ENCODE measurements at regions of chr7 and their contacts with region 1.

Region 1: GRCh38 chr7:76179686-76180085 is 22.0 kb upstream of the SRRM3 start:
- DNase-seq: no peak
- H3K4me3 ChIP-seq: no peak overlapping the region
- H3K27ac ChIP-seq: no peak overlapping the region
- H3K4me1 ChIP-seq: peaks cover 0 to 2% of the 10 kb centered on the region in 2 experiments; a peak in 1 of 4 replicates
- H3K27me3 ChIP-seq: no peaks in the 10 kb centered on the region
- CTCF ChIP-seq: no peak
- EP300 ChIP-seq: no peak
- RAD21 ChIP-seq: no peak

Region 2: GRCh38 chr7:76108540-76109241 is 71.0 kb before region 1 on chr7:
- CTCF ChIA-PET with region 1: no interaction called
- POLR2A ChIA-PET with region 1: no interaction called
- DNase-seq: no peak
- H3K4me3 ChIP-seq: no peak overlapping the region
- H3K27ac ChIP-seq: peak overlapping the region in 1 of 2 experiments; percentile 52; a peak in 2 of 4 replicates
- H3K4me1 ChIP-seq: peaks cover 0 to 9% of the 10 kb centered on the region in 2 experiments; a peak in 2 of 4 replicates
- H3K27me3 ChIP-seq: no peaks in the 10 kb centered on the region
- CTCF ChIP-seq: no peak
- EP300 ChIP-seq: no peak
- RAD21 ChIP-seq: no peak

Region 3: GRCh38 chr7:76166404-76167255 is 13.1 kb before region 1 on chr7:
- CTCF ChIA-PET with region 1: interaction called, 63 read pairs
- POLR2A ChIA-PET with region 1: interaction called, 7 read pairs
- DNase-seq: peak; percentile 99
- H3K4me3 ChIP-seq: peak overlapping the region; percentile 65 to 69
- H3K27ac ChIP-seq: peak overlapping the region; percentile 59 to 70; a peak in 3 of 4 replicates
- H3K4me1 ChIP-seq: peaks cover 0 to 3% of the 10 kb centered on the region in 2 experiments; a peak in 1 of 4 replicates
- H3K27me3 ChIP-seq: no peaks in the 10 kb centered on the region
- CTCF ChIP-seq: peak; percentile 28; the same call in 1 of the 2 replicates
- EP300 ChIP-seq: no peak
- RAD21 ChIP-seq: peak; percentile 27

Region 4: GRCh38 chr7:76211216-76211615 is 31.5 kb after region 1 on chr7:
- CTCF ChIA-PET with region 1: interaction called, 100 read pairs
- POLR2A ChIA-PET with region 1: interaction called, 4 read pairs
- DNase-seq: no peak
- H3K4me3 ChIP-seq: no peak overlapping the region
- H3K27ac ChIP-seq: no peak overlapping the region
- H3K4me1 ChIP-seq: peaks cover 0 to 9% of the 10 kb centered on the region in 2 experiments; a peak in 1 of 4 replicates
- H3K27me3 ChIP-seq: peaks cover 29% of the 10 kb centered on the region
- CTCF ChIP-seq: no peak
- EP300 ChIP-seq: no peak
- RAD21 ChIP-seq: no peak

Region 5: GRCh38 chr7:76244781-76245391 is 65.2 kb after region 1 on chr7:
- CTCF ChIA-PET with region 1: interaction called, 11 read pairs
- POLR2A ChIA-PET with region 1: interaction called, 7 read pairs
- DNase-seq: peak; percentile 51
- H3K4me3 ChIP-seq: no peak overlapping the region
- H3K27ac ChIP-seq: peak overlapping the region in 1 of 2 experiments; percentile 45; a peak in 2 of 4 replicates
- H3K4me1 ChIP-seq: peaks cover 0 to 14% of the 10 kb centered on the region in 2 experiments; a peak in 1 of 4 replicates
- H3K27me3 ChIP-seq: no peaks in the 10 kb centered on the region
- CTCF ChIP-seq: no peak
- EP300 ChIP-seq: no peak
- RAD21 ChIP-seq: no peak

Region 6: GRCh38 chr7:76272851-76273497 is 93.3 kb after region 1 on chr7:
- CTCF ChIA-PET with region 1: interaction called, 62 read pairs
- POLR2A ChIA-PET with region 1: no interaction called
- DNase-seq: no peak
- H3K4me3 ChIP-seq: no peak overlapping the region
- H3K27ac ChIP-seq: no peak overlapping the region
- H3K4me1 ChIP-seq: no peaks in the 10 kb centered on the region
- H3K27me3 ChIP-seq: no peaks in the 10 kb centered on the region
- CTCF ChIP-seq: no peak
- EP300 ChIP-seq: no peak
- RAD21 ChIP-seq: no peak

Region 7: GRCh38 chr7:76302347-76303201 is 122.9 kb after region 1 on chr7 and contains the start of gene HSPB1:
- CTCF ChIA-PET with region 1: interaction called, 88 read pairs
- POLR2A ChIA-PET with region 1: no interaction called
- DNase-seq: peak; percentile 93
- H3K4me3 ChIP-seq: peak within 1 kb of the TSS; percentile 63 to 96
- H3K27ac ChIP-seq: peak within 1 kb of the TSS; percentile 71 to 86
- H3K4me1 ChIP-seq: peaks cover 18 to 21% of the 10 kb centered on the region in 2 experiments; a peak in 2 of 4 replicates
- H3K27me3 ChIP-seq: no peaks in the 10 kb centered on the region
- CTCF ChIP-seq: 0 out of 2 replicates have a peak, but pooled peaks have one; percentile 21
- EP300 ChIP-seq: peak; percentile 44 to 93; a peak in 3 of 4 replicates
- RAD21 ChIP-seq: peak; percentile 38; the same call in 1 of the 2 replicates
- polyA plus RNA-seq, gene HSPB1: 439 and 824 TPM in 2 replicates